Heart right ventricle (tissue), 16 donors: ENCODE measurements at regions of chr4 and their contacts with region 1.

Region 1: DNA sequence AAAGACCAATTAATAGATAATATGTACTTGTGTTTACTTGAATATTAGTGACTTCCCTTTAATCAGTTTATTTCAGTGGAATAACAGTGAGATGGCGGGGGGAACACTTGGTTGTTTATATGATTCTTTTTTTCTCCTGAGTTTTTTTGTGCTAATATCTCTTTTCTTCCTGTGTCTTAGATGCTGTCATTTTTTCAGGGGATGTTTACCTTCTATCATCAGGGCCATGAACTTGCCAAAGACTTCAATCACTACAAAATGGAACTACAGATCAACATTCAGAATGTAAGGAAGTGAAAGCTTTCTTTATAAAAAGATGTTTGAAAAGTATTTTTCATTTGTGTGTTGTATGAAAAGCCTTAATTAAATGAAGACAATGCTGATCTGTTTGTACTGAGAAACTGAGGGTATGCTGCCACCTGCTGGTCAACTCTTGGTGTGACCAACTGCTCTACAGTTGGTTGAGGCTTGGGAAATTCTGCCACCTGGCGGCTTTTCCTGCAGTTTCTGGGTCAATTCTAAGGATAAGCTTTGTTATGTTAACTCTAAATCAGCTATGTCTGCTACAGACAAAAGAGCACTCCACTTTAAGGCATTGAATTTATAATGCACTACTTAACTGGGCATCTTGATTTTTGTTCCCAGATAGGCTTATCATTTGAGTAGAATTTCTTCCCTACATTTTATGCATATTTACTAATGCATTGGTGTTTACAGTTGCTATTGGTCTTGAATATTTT is 134.8 kb downstream of the ARHGAP10 start:
- DNase-seq: peak; percentile 88 to 94
- ATAC-seq: peak; percentile 85 to 92 (median 89)
- H3K4me3 ChIP-seq: no peak overlapping the region
- H3K27ac ChIP-seq: peak overlapping the region in 2 of 10 donors; percentile 9 to 38
- H3K4me1 ChIP-seq: peaks cover 0 to 47% (median 27%) of the 10 kb centered on the region in 9 donors
- H3K27me3 ChIP-seq: no peaks in the 10 kb centered on the region
- CTCF ChIP-seq: peak; percentile 99 to 100 (median 100)

Region 2: DNA sequence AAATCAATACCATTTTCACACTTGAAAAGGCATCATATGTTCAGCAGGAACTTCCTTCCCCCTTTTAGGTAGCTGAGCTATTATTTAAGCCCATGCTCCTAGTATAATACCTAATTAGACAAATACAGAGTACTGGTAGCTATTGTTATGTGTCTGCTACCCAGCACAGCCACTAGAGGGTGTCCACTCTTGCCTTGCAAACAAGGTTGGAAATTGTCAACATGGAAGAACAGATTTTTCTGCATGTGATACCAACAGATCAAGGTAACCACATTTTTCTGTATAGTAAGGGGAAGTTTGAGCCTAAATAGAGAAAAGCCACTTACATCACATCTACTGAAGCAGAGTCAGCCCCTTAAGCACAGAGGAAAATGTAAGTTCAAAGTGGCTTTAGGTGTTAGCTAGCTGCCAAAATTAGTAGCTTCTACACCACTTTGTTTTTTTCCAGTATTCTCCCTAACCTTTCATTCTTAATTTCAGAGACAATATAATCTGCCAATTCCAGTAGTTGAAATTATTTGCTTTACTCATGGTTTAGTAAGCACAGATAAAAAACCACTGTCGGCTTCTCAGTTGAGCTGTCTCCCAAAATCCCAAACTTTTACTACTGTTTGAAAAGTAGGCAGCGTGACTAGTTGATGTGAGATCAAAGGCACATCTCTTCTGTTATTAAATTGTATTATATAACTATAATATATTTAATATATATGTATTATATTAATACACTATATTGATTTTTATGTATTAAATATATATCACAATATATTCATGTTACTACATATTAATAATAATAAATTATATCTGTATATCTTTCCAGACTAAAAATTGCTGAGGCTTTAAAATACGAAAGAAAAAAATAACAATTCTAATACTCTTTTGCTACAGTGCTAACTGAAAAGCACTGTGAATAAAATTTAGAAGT is 347.6 kb before region 1 on chr4:
- intact Hi-C with region 1: loop called in 2 of 10 experiments (anchors 5 kb)
- DNase-seq: peak in 1 of 2 donors; percentile 29
- ATAC-seq: peak in 1 of 8 donors; percentile 46
- H3K4me3 ChIP-seq: no peak overlapping the region
- H3K27ac ChIP-seq: no peak overlapping the region
- H3K4me1 ChIP-seq: peaks cover 0 to 30% (median 0%) of the 10 kb centered on the region in 9 donors
- H3K27me3 ChIP-seq: no peaks in the 10 kb centered on the region
- CTCF ChIP-seq: peak; percentile 40 to 80 (median 69)

Region 3: GRCh38 chr4:147542229-147542990 is 324.3 kb before region 1 on chr4:
- intact Hi-C with region 1: no loop called
- DNase-seq: no peak
- ATAC-seq: no peak
- H3K4me3 ChIP-seq: no peak overlapping the region
- H3K27ac ChIP-seq: no peak overlapping the region
- H3K4me1 ChIP-seq: no peaks in the 10 kb centered on the region
- H3K27me3 ChIP-seq: no peaks in the 10 kb centered on the region
- CTCF ChIP-seq: no peak

Region 4: GRCh38 chr4:147707865-147708672 is 158.6 kb before region 1 on chr4:
- intact Hi-C with region 1: loop called (anchors 1 to 5 kb)
- DNase-seq: peak in 1 of 2 donors; percentile 43
- ATAC-seq: peak; percentile 54 to 75 (median 64)
- H3K4me3 ChIP-seq: peak overlapping the region in 2 of 10 donors; percentile 16 to 25
- H3K27ac ChIP-seq: no peak overlapping the region
- H3K4me1 ChIP-seq: peaks cover 0 to 8% (median 0%) of the 10 kb centered on the region in 9 donors
- H3K27me3 ChIP-seq: no peaks in the 10 kb centered on the region
- CTCF ChIP-seq: peak; percentile 80 to 90 (median 86)

Region 5: GRCh38 chr4:147723326-147723725 is 143.4 kb before region 1 on chr4:
- intact Hi-C with region 1: loop called in 3 of 10 experiments (anchors 5 kb)
- DNase-seq: no peak
- ATAC-seq: peak in 2 of 8 donors; percentile 33 to 61
- H3K4me3 ChIP-seq: no peak overlapping the region
- H3K27ac ChIP-seq: no peak overlapping the region
- H3K4me1 ChIP-seq: no peaks in the 10 kb centered on the region
- H3K27me3 ChIP-seq: no peaks in the 10 kb centered on the region
- CTCF ChIP-seq: no peak

Region 6: DNA sequence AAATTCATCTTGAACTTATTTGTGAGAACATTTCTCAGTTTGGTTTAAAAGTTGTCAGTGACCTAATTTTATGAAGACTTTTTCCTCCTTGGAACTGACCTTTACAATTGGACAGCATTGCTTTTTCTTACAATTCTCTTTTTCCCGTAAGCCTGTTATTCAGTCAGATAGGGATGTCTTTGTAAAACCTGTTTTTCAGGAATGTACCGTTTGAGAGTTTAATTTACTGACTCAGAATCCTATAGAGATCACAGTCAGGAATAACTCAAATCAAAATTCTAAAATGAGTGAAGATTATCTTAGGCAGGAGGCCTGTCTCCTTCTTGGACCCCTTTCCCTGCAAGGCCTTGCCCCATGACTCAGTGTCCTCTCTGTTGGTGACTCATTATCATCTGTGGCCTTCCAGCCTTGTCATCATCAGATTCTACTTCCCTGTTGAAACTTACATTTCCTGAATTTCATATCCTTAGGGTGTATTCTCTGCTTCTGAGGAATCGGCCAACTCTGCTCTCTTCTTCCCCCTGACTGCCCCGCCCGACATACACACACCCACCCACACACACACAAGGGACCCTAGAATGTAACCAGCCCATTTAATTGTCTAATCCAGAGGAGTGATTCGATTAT is 35.0 kb before region 1 on chr4:
- intact Hi-C with region 1: loop called in 1 of 10 experiments (anchors 2 kb)
- DNase-seq: peak in 1 of 2 donors; percentile 29
- ATAC-seq: peak; percentile 20 to 81 (median 53)
- H3K4me3 ChIP-seq: no peak overlapping the region
- H3K27ac ChIP-seq: peak overlapping the region; percentile 73 to 93 (median 89)
- H3K4me1 ChIP-seq: peaks cover 15 to 79% (median 58%) of the 10 kb centered on the region in 9 donors
- H3K27me3 ChIP-seq: no peaks in the 10 kb centered on the region
- CTCF ChIP-seq: no peak

Region 7: DNA sequence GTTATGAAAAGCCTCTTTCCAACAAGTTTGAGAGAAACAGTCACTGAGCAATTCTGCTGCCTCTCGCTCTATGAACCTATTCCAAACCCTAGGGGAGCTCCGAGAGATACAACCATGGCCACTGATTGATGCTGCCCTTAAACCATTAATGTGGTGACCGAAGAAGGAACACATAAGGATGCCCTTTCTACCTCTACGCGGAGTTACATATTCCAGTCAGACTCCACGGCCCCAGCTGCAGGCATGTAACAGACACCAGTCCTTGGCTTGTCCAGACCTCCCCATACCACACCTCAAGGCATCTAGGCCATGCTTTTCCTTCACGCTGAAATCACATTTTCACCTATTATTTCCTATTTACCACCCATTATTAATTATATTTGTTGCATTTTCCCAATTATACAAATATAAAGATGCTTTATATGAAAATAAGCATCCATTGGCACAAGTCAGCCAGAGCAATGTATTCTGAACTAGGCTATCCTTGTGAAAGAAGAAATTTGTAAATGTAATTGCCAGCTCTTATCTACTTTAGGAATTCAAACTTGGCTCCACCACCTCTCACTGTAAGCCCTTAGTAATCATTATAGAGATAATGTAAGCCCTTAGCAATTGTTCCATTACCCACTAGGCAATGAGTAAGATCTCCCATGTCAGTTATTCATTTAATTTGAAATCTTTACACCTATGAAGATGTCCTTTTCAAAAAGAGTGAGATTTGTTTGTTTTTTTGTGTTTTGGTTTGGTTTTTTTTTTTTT is 237.1 kb after region 1 on chr4:
- intact Hi-C with region 1: no loop called
- DNase-seq: no peak
- ATAC-seq: peak in 5 of 8 donors; percentile 63 to 87 (median 70)
- H3K4me3 ChIP-seq: no peak overlapping the region
- H3K27ac ChIP-seq: peak overlapping the region in 1 of 10 donors; percentile 1
- H3K4me1 ChIP-seq: peaks cover 0 to 16% (median 10%) of the 10 kb centered on the region in 9 donors
- H3K27me3 ChIP-seq: no peaks in the 10 kb centered on the region
- CTCF ChIP-seq: no peak